Posterior vena cava (tissue), 2 donors: ENCODE measurements at regions of chr15 and their contacts with region 1.

Region 1: GRCh38 chr15:74156678-74157411 is 16.7 kb upstream of the ISLR start:
- DNase-seq: no peak

Region 2: DNA sequence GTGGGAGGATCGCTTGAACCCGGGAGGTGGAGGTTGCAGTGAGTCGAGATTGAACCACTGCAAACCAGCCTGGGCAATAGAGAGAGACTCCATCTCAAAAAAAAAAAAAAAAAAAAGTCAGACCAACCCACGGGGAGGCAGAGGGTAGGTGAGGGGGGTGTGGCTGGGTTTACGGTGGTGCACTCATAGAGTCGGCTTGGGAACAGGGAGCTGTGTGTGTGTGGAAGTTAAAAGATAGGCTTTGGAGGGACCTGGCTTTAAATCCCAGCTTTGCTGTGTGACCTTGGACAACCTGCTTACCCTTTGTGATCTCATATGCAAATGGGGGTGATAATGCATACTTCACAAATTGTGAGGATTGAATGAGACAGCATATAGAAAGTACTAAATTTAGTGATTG is 36.4 kb before region 1 on chr15:
- intact Hi-C with region 1: loop called in 1 of 2 experiments (anchors 1 kb)
- DNase-seq: no peak

Region 3: GRCh38 chr15:74222240-74223119 is 65.6 kb after region 1 on chr15:
- intact Hi-C with region 1: no loop called
- DNase-seq: no peak

Region 4: GRCh38 chr15:74345051-74345450 is 188.2 kb after region 1 on chr15:
- intact Hi-C with region 1: no loop called
- DNase-seq: peak; percentile 58